Caco-2 (cell line): ENCODE measurements at regions of chr1 and their contacts with region 1.

Region 1: DNA sequence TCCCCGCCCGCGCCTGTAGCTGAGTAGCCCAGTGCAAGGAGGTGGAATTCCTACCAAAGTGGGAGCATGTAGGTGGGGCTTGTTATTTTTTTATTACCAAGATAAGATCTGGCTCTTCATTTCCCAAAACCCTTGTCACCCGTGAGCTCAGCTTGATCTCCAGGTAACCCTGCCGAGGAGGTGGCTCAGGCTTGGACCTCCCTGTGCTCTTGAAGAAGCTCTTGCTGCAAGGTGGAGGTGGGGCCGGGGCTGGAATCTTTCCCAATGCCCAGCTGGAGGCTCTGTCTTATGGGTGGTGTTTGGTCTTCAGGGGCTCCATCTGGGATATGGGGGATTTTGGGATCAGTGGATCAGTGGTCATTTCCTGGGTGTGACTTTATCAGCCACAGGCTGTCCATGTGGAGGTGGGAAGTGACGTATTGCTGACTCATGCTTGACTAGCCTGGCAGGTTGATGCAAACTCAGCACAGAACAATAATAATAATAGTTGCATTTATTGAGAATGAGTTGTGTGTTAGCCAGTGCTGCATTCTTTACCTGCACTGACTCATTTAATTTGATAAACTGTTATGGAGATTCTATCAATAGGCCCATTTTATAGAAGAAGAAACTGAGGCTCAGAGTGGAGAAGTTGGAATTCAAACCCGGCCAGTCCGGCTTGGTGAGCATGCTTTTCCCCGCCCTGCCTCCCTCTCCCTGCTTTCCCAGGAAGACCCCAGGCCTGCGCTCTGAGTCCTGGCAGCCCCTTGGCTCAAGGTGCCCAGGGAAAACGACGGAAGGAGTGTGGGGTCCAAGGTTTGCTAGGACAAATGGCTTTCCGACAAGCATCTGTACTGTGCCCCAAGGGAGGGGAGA is 23.6 kb upstream of the PADI6 start:
- DNase-seq: no peak
- H3K4me3 ChIP-seq: no peak overlapping the region
- H3K4me3 Mint-ChIP-seq: no peak overlapping the region
- H3K27ac Mint-ChIP-seq: no peak overlapping the region
- H3K4me1 ChIP-seq: no peaks in the 10 kb centered on the region
- H3K4me1 Mint-ChIP-seq: no peaks in the 10 kb centered on the region
- H3K27me3 ChIP-seq: no peaks in the 10 kb centered on the region
- H3K27me3 Mint-ChIP-seq: peaks cover 11% of the 10 kb centered on the region
- CTCF ChIP-seq: no peak

Region 2: DNA sequence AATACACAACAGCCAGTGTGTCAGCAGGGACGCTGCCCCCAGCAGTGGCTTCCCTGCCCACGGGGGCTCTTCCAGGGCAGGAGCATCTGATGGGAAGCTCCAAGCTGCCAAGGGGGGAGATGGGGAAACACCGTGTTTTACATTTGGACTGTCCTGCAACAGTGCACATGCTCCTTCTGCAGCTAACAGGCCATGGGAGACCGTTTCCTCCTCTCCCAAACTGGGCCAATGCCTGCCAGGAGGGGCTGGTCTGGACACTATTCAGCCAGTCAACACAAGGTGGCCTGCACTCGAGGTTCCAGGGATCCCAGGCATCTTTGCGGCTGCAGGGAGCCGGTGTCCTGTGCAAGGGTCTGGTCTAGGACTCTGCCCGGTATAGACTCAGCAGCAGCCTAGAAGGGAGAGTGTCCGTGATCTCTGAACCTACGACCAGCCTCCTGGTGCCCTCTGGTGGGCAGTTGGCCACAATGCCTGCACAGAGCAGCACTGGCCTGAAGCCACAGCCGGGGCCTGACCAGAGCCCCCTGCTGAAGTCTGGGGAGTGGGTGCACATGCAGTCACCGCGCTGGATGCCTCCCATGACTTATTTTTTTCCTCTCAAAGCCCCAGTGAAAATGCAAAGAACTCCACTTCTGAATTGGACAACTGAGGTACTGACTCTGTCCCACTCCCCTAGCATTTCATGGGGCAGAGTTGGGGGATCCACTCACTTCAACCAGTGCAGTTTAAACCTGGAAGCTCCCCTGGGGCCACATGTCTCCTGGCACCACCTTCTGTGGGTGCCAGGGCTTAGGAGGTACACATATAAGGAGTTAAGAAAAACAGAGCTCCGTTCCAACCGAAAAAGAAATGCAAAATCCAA is 57.8 kb after region 1 on chr1:
- CTCF ChIA-PET with region 1: no interaction called
- POLR2A ChIA-PET with region 1: no interaction called
- intact Hi-C with region 1: loop called (anchors 10 kb)
- DNase-seq: peak; percentile 66 to 78
- H3K4me3 ChIP-seq: no peak overlapping the region
- H3K4me3 Mint-ChIP-seq: no peak overlapping the region
- H3K27ac Mint-ChIP-seq: no peak overlapping the region
- H3K4me1 ChIP-seq: no peaks in the 10 kb centered on the region
- H3K4me1 Mint-ChIP-seq: no peaks in the 10 kb centered on the region
- H3K27me3 ChIP-seq: no peaks in the 10 kb centered on the region
- H3K27me3 Mint-ChIP-seq: no peaks in the 10 kb centered on the region
- CTCF ChIP-seq: peak; percentile 53 to 76

Region 3: DNA sequence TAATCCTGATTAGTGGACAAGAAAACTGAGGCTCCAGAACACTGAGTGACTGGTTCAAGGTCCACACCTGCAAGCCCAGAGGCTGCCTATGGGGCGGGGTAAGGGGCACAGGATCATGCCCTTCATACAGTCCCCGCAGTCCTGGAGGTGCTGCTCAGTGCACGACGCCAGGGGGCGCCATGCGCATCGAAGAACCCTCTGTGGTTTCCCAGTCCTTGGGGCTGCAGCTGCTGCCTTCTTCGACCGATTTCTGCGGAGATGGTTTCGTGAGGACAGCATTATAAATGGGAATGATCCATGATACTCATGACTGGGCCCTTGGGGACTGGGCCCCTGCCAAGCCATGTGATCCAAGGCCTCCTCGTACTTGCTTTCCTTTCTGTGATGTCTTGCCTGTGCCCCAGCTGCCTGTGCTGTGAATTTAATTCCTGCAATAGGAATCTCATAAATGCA is 154.0 kb after region 1 on chr1:
- CTCF ChIA-PET with region 1: no interaction called
- POLR2A ChIA-PET with region 1: no interaction called
- intact Hi-C with region 1: no loop called
- DNase-seq: peak; percentile 68 to 80
- H3K4me3 ChIP-seq: no peak overlapping the region
- H3K4me3 Mint-ChIP-seq: no peak overlapping the region
- H3K27ac Mint-ChIP-seq: no peak overlapping the region
- H3K4me1 ChIP-seq: 0 out of 2 replicates have a peak, but pooled peaks cover 7% of the 10 kb centered on the region
- H3K4me1 Mint-ChIP-seq: peaks cover 7% of the 10 kb centered on the region
- H3K27me3 ChIP-seq: no peaks in the 10 kb centered on the region
- H3K27me3 Mint-ChIP-seq: no peaks in the 10 kb centered on the region
- CTCF ChIP-seq: peak; percentile 72 to 74